K562 (cell line): ENCODE measurements at regions of chr7 and their contacts with region 1.

Region 1: GRCh38 chr7:99918959-99919813 is at the start of gene TRIM4:
- DNase-seq: peak; percentile 96 to 97 (median 96)
- ATAC-seq: peak; percentile 99
- H3K4me3 ChIP-seq: peak within 1 kb of the TSS; percentile 86
- H3K27ac ChIP-seq: peak within 1 kb of the TSS; percentile 81
- H3K4me1 ChIP-seq: peaks cover 13 to 18% of the 10 kb centered on the region in 2 experiments; a peak in 4 of 5 replicates
- H3K27me3 ChIP-seq: no peaks in the 10 kb centered on the region
- CTCF ChIP-seq: peak; percentile 50 to 70 (median 53)
- EP300 ChIP-seq: no peak; the same call in none of the 2 replicates
- POLR2A ChIP-seq: peak; percentile 93
- RAD21 ChIP-seq: peak in 1 of 2 experiments; percentile 36; a peak in 3 of 4 replicates
- polyA plus RNA-seq, gene TRIM4: 6.2 to 6.5 TPM

Region 2: DNA sequence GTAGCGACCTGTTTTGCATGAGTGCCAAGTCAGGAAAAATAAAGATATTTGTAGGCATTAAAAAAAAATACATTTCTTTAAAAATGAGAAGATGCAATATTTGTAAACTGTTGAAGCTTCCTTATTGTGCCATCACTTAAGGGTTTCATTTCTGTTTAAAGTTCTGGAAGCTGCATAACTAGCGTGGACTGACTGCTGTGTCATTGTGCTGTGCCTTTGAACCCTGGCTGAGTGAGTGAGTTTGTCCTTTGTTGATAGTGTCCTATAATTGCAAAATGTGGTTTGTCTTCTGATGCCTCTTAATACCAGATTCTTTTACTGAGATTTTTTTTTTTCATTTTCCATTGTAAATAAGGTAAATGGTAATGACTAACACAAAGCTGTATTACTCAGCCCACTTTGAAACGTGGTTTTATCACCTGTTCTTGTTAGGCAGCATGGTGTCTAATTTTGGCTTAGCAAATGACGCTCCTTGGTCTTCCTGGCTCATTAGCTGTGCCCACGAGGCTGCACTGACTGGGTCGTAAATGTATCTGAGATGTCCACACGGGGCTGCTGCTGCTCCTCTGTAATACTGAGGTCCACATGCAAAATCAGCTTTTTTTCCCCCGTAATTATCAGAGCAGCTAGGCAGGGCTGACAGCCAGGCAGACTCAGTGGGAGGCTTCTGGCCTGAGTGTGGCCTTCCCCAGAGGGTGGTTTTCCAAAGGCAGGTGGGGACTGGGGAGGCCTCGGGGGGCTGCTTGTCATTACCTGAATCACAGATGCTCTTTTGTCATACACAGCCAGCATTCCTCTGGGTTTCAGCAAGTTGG is 287.7 kb before region 1 on chr7:
- CTCF ChIA-PET with region 1: no interaction called
- POLR2A ChIA-PET with region 1: no interaction called
- in situ Hi-C with region 1: no loop called
- intact Hi-C with region 1: loop called (anchors 5 kb)
- DNase-seq: peak; percentile 39 to 76 (median 58)
- ATAC-seq: peak; percentile 94
- H3K4me3 ChIP-seq: no peak overlapping the region
- H3K27ac ChIP-seq: no peak overlapping the region; the same call in 2 of the 3 replicates
- H3K4me1 ChIP-seq: peaks cover 0 to 4% of the 10 kb centered on the region in 2 experiments; a peak in 4 of 5 replicates
- H3K27me3 ChIP-seq: no peaks in the 10 kb centered on the region
- CTCF ChIP-seq: peak; percentile 70 to 90 (median 80)
- EP300 ChIP-seq: no peak
- POLR2A ChIP-seq: no peak
- RAD21 ChIP-seq: peak; percentile 84 to 88

Region 3: GRCh38 chr7:99975782-99976521 is 56.8 kb after region 1 on chr7 and contains the start of gene AZGP1:
- CTCF ChIA-PET with region 1: no interaction called
- POLR2A ChIA-PET with region 1: interaction called, 3 read pairs
- in situ Hi-C with region 1: no loop called
- intact Hi-C with region 1: loop called (anchors 2 kb)
- DNase-seq: no peak
- ATAC-seq: no peak
- H3K4me3 ChIP-seq: no peak within 1 kb of the TSS
- H3K27ac ChIP-seq: no peak within 1 kb of the TSS
- H3K4me1 ChIP-seq: peaks cover 4 to 7% of the 10 kb centered on the region in 2 experiments; a peak in 2 of 5 replicates
- H3K27me3 ChIP-seq: peaks cover 13 to 24% of the 10 kb centered on the region in 2 experiments; a peak in 3 of 5 replicates
- CTCF ChIP-seq: no peak
- EP300 ChIP-seq: no peak
- POLR2A ChIP-seq: no peak
- RAD21 ChIP-seq: no peak
- polyA plus RNA-seq, gene AZGP1: not detected

Region 4: GRCh38 chr7:100126931-100127865 is 208.0 kb after region 1 on chr7 and contains the start of gene MBLAC1:
- CTCF ChIA-PET with region 1: interaction called, 26 read pairs
- POLR2A ChIA-PET with region 1: interaction called, 4 read pairs
- in situ Hi-C with region 1: loop called (anchors 5 kb)
- intact Hi-C with region 1: loop called (anchors 2 kb)
- DNase-seq: peak; percentile 90 to 96 (median 94)
- ATAC-seq: peak; percentile 70
- H3K4me3 ChIP-seq: peak within 1 kb of the TSS; percentile 74
- H3K27ac ChIP-seq: peak within 1 kb of the TSS; percentile 97
- H3K4me1 ChIP-seq: peaks cover 35 to 60% of the 10 kb centered on the region in 2 experiments
- H3K27me3 ChIP-seq: no peaks in the 10 kb centered on the region
- CTCF ChIP-seq: peak in 1 of 3 experiments; percentile 25; a peak in 1 of 6 replicates
- EP300 ChIP-seq: 0 out of 2 replicates have a peak, but pooled peaks have one; percentile 7
- POLR2A ChIP-seq: peak; percentile 92
- RAD21 ChIP-seq: no peak
- polyA plus RNA-seq, gene MBLAC1: 0.03 TPM